ENCODE measurements at regions of chr17 and their contacts with region 1.

Region 1: DNA sequence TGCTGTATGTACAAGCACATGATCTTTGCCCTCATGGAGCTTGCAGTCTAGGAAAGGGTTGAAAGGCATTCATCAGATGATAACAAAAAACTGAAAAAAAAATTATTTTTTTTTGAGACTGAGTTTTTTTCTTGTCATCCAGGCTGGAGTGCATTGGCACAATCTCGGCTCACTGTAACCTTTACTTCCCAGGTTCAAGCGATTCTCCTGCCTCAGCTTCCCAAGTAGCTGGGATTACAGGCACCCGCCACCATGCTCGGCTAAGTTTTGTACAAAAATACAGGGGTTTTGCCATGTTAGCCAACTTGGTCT is 38.7 kb upstream of the BCAS3 start:
- DNase-seq: no peak

Region 2: DNA sequence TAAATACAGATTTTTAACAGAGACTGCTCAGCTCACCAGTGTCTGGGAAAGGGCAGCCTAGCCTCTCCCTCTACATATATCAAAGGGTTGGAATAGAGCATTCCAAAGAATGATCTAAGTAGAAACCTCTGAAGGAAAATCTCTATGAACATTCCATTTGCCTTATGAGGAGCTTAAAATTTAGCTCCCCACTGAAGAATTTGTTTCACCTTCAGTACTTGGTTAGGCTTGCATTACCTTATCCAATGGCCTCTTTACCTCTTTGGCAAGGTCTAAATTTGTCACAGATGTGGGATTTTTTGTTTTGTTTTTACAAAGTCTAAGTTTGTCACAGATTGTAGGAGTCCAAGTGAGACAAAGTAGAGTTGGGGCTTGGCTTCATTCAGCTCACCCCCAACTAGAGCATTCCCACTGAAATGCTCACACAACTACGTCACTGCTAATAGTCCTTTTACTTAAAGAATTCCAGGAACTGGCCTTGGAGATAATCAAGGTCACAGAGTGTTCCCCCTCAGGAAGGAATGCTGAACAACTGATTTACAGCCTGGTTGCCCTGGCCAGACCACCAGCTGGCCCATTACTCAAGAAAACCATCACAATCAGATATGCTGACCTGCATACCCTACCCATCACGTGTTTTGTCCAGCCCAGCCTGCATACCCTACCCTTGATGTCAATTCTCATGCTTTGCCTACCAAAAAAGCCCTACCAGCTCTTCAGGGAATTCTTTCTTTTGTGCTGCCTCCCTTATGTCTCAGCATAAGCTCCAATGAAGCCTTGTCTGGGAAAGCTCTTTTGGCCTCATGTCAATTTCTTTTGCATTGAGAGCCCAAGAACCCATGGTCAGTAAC is 65.5 kb before region 1 on chr17:
- intact Hi-C with region 1: loop called (anchors 5 kb)
- DNase-seq: no peak